K562 (cell line): ENCODE measurements at regions of chr11 and their contacts with region 1.

Region 1: DNA sequence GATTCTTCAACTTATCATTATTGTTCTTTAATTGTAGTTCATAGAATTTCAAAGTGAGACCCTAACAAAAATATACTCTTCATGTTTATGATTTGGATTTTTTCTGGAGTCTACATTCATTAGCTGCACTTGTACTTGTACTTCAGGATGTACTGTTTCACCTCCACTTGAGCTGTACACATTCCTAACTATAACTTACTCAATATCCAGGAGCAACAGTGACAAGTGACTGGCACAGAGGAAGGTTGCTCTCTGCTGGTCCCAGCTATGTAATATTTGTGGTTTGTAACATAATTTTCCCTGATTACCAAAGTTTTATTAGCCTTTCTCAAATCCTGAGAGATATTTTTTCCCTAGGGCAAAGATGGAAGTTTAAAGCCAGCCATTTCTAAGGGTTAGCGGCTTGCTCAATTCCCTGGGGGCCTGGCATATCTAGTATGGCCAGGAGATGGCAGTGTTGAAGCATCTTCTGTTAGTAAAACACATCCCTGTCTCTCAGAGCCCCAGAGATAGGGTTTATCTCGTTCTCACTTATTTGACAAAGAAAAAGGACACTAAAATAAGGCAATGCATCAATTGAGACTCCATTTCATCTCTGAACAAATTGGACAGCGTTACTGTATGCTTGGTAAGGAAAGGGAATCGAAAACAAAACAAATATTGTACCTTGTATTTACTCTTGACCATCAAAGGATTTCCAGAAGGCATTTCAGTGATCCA is 14.2 kb downstream of the OR52A5 start:
- DNase-seq: peak; percentile 67 to 91 (median 76)
- ATAC-seq: peak; percentile 97
- H3K4me3 ChIP-seq: no peak overlapping the region
- H3K27ac ChIP-seq: no peak overlapping the region
- H3K4me1 ChIP-seq: peaks cover 0 to 9% of the 10 kb centered on the region in 2 experiments; a peak in 2 of 5 replicates
- H3K27me3 ChIP-seq: no peaks in the 10 kb centered on the region
- CTCF ChIP-seq: peak; percentile 80 to 92 (median 88)
- EP300 ChIP-seq: no peak
- POLR2A ChIP-seq: no peak
- RAD21 ChIP-seq: peak; percentile 97

Region 2: DNA sequence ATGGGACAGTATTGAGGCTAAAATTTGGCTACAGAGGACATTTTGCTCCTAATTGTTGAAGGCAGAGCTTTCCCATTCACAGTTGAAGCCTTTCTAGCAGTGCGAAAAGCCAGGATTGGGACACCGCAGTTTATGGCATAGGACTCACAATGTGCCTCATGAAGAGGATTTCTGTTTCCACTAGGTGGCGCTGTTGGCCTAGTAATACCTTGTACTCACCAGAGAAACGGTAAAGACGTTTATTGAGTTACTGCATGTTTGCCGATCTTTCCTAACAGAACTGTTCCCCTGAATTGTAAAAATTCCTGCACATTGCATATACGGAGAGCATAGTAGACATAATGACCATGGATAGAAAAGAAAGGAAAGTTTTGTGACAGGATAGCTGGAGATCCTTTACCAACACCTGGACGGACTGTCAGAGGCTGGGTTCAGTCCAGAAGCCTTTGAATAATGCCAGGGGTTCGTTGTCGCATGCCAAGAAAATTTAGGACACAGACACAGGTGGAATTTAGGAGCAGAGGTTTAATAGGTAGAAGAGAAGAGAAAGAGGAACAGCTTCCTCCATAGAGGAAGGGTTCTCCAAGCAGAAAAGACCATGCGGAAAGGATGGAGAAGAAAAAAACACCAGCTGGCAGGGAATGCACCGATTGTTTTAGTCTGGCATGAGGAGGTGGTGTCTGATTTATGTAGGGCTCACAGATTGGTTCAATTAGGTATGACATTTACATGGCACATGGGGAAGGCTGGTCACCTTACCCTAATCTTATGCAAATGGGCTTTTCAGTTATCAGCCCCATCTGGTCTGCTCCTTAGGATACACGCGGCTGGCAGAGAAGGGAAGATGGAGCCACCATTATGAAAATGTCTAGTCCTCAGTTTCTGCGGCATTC is 497.5 kb before region 1 on chr11:
- CTCF ChIA-PET with region 1: no interaction called
- POLR2A ChIA-PET with region 1: no interaction called
- in situ Hi-C with region 1: no loop called
- intact Hi-C with region 1: loop called (anchors 10 kb)
- DNase-seq: peak; percentile 43 to 89 (median 61)
- ATAC-seq: peak; percentile 96
- H3K4me3 ChIP-seq: no peak overlapping the region
- H3K27ac ChIP-seq: no peak overlapping the region
- H3K4me1 ChIP-seq: no peaks in the 10 kb centered on the region
- H3K27me3 ChIP-seq: no peaks in the 10 kb centered on the region
- CTCF ChIP-seq: peak; percentile 63 to 82 (median 81)
- EP300 ChIP-seq: no peak
- POLR2A ChIP-seq: no peak
- RAD21 ChIP-seq: peak; percentile 71 to 90

Region 3: DNA sequence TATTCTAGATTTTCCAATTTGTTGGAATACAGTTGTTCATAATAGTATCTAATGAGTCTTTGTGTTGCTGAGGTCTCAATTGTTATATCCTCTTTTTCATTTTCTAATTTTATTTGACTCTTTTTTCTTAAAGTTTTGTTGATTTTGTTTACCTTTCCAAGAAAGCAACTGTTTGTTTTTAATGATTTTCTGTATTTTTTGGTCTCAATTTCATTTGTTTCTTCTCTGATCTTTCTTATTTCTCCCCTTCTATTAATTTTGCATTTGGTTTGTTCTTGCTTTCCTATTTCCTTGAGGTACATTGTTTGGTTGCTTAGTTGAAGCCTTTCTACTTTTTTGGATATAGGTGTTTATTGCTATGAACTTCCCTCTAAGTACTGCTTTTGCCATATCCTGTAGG is 35.8 kb after region 1 on chr11:
- CTCF ChIA-PET with region 1: no interaction called
- POLR2A ChIA-PET with region 1: no interaction called
- in situ Hi-C with region 1: no loop called
- intact Hi-C with region 1: no loop called
- DNase-seq: no peak
- ATAC-seq: no peak; the same call in 1 of the 3 replicates
- H3K4me3 ChIP-seq: no peak overlapping the region
- H3K27ac ChIP-seq: 0 out of 3 replicates have a peak overlapping the region, but pooled peaks have one; percentile 7
- H3K4me1 ChIP-seq: peaks cover 0 to 3% of the 10 kb centered on the region in 2 experiments; a peak in 2 of 5 replicates
- H3K27me3 ChIP-seq: no peaks in the 10 kb centered on the region
- CTCF ChIP-seq: no peak
- EP300 ChIP-seq: no peak
- POLR2A ChIP-seq: no peak
- RAD21 ChIP-seq: no peak

Region 4: GRCh38 chr11:5197536-5197935 is 73.6 kb after region 1 on chr11:
- CTCF ChIA-PET with region 1: interaction called, 3 read pairs
- POLR2A ChIA-PET with region 1: no interaction called
- in situ Hi-C with region 1: no loop called
- intact Hi-C with region 1: loop called (anchors 2 kb)
- DNase-seq: no peak
- ATAC-seq: peak; percentile 21
- H3K4me3 ChIP-seq: no peak overlapping the region
- H3K27ac ChIP-seq: no peak overlapping the region
- H3K4me1 ChIP-seq: peaks cover 6 to 18% of the 10 kb centered on the region in 2 experiments; a peak in 4 of 5 replicates
- H3K27me3 ChIP-seq: no peaks in the 10 kb centered on the region
- CTCF ChIP-seq: no peak
- EP300 ChIP-seq: no peak
- POLR2A ChIP-seq: no peak
- RAD21 ChIP-seq: no peak

Region 5: DNA sequence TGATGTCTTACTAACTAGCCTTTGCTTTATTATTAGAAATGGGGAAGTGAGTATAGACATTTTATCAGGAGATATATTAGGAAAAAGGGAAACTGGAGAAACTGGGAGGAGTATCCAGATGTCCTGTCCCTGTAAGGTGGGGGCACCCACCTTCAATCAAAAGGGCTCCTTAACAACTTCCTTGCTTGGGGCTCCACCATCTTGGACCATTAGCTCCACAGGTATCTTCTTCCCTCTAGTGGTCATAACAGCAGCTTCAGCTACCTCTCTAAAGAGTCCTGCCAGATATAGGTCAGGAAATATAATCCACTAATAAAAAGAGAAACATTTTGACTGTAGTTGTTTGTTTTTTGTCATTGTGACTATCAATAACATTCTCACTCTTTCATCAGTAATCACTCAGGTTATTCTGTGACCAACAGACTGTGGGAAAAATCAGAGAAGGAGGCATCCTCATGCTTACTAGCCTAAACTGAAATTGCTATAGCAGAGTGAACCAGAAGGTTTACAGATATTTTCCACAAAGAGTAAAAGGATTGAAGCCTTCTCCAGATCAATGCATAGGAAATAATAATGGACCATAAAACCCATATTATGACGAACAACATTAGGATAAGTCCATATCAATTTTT is 167.4 kb after region 1 on chr11:
- CTCF ChIA-PET with region 1: interaction called, 16 read pairs
- POLR2A ChIA-PET with region 1: interaction called, 3 read pairs
- in situ Hi-C with region 1: loop called (anchors 5 kb)
- intact Hi-C with region 1: loop called (anchors 1 kb)
- DNase-seq: peak; percentile 49 to 88 (median 63)
- ATAC-seq: peak; percentile 81
- H3K4me3 ChIP-seq: no peak overlapping the region
- H3K27ac ChIP-seq: peak overlapping the region; percentile 31
- H3K4me1 ChIP-seq: peaks cover 18 to 50% of the 10 kb centered on the region in 2 experiments; a peak in 4 of 5 replicates
- H3K27me3 ChIP-seq: no peaks in the 10 kb centered on the region
- CTCF ChIP-seq: peak; percentile 80 to 93 (median 89)
- EP300 ChIP-seq: peak; percentile 42; the same call in 1 of the 2 replicates
- POLR2A ChIP-seq: no peak
- RAD21 ChIP-seq: peak; percentile 95 to 98

Region 6: DNA sequence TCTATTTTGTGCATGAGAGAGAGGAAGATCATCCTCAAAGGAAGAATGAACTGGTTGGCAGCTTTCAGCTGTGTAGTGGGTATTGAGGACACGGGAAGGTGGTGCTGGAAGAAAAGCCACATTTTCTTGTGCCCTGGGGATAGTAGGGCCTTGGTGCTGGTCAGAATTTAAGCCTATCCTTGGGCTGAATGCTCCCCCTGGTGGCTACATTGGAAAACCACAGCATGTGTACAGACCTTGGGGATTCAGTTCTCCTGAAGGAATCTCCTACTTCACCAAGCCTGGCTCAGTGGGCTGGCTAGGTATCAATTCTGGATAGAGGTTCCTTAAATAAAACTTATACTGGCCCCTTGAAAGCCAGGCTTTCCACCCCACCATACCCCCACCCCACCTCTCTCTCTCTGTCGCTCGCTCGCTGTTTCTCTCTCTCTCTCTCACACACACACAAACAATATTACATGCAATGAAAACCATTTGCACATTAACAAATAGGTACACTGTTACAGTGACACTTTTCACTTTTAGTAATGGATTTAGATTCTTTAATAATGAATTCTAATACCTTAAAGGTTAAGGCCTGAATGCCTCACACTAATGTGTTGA is 256.9 kb after region 1 on chr11:
- CTCF ChIA-PET with region 1: interaction called, 3 read pairs
- POLR2A ChIA-PET with region 1: no interaction called
- in situ Hi-C with region 1: loop called (anchors 5 kb)
- intact Hi-C with region 1: loop called (anchors 5 kb)
- DNase-seq: peak; percentile 53 to 70 (median 56)
- ATAC-seq: peak; percentile 97
- H3K4me3 ChIP-seq: no peak overlapping the region
- H3K27ac ChIP-seq: no peak overlapping the region
- H3K4me1 ChIP-seq: no peaks in the 10 kb centered on the region; a peak in 1 of 5 replicates
- H3K27me3 ChIP-seq: no peaks in the 10 kb centered on the region
- CTCF ChIP-seq: peak; percentile 59 to 74 (median 69)
- EP300 ChIP-seq: no peak
- POLR2A ChIP-seq: no peak
- RAD21 ChIP-seq: peak; percentile 71 to 73